ENCODE measurements at regions of chr6 and their contacts with region 1.

Region 1: DNA sequence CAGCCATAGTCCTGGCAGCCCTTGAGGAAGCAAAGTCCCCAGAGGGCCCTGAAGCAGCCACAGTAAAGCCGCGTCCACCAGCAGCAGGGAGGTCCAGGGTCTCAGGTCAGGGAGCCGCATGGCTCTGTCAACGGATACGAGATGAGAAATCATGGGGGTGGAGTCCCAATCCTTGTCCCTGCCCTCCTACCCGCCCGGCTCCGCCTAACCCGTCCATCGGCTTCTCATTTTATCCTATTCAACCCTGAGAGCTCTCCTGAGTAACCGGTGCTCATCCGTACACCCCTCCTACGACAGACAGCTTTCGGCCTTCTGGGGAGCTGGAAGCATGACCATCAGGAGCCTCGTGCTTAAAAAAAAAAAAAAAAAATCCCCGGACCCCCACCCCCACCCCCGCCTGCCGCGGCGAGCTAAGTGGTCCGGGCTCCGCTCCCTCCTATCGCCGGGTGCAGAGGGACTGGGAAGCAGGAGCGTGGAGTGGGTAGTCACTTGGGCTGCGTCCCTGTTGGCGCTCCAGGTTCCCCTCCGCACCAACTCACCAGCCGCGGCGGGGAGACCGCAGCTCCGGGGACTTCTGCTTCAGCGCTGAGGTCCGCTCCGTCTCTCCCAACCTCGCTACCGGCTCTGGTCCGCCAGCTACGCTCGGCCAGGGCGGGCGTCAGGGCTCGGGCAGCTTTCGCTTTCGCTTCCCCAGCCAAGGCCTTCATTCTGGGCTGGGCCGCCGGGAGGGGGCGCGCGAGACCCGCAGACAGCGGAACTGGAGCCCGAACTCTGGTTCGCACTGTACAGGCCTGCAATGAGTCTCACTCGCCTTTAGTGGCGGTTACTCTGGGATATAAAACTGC is at the start of gene TAP2:
- DNase-seq: peak; percentile 100
- H3K4me3 Mint-ChIP-seq: peak within 1 kb of the TSS; percentile 77
- H3K27ac Mint-ChIP-seq: peak within 1 kb of the TSS; percentile 0
- H3K4me1 Mint-ChIP-seq: peaks cover 29% of the 10 kb centered on the region
- H3K27me3 Mint-ChIP-seq: no peaks in the 10 kb centered on the region
- CTCF ChIP-seq: peak; percentile 98
- total RNA-seq, gene TAP2: 180 and 279 TPM in 2 replicates

Region 2: DNA sequence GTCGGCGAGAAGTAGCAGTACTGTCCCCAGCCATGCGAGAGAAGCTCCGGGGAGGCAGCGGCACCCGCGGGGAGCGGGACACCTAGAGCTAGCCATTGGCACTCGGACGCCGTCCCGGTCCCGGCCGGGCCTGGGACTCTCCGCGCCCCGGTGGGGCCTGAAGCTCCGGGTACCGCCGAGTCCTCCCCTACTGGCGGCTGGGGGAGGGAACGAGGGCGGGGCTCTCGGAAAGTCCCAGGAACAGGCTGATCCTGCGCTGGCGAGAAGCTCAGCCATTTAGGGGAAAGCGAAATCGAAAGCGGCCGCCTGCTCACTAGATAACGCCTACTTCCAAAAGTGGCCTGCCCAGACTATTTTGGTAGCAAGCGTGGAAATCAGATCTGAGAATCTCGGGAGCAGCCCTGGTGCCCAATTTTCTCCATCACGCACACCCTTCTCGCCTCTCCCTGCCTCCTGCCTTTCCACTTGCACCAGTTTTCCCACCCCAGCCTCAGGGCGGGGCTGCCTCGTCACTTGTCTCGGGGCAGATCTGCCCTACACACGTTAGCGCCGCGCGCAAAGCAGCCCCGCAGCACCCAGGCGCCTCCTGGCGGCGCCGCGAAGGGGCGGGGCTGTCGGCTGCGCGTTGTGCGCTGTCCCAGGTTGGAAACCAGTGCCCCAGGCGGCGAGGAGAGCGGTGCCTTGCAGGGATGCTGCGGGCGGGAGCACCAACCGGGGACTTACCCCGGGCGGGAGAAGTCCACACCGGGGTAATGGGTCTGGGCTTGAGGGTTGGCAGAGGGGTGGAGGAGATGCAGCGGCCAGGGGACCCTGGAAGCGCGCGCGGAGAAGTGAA is 15.4 kb after region 1 on chr6 and contains the starts of genes PSMB9 and TAP1:
- CTCF ChIA-PET with region 1: interaction called, 131 read pairs
- intact Hi-C with region 1: loop called (anchors 2 kb)
- DNase-seq: peak; percentile 99
- H3K4me3 Mint-ChIP-seq: peak within 1 kb of the TSS; percentile 100
- H3K27ac Mint-ChIP-seq: peak within 1 kb of the TSS; percentile 92
- H3K4me1 Mint-ChIP-seq: peaks cover 30% of the 10 kb centered on the region
- H3K27me3 Mint-ChIP-seq: no peaks in the 10 kb centered on the region
- CTCF ChIP-seq: peak; percentile 87
- total RNA-seq, gene PSMB9: 120 and 201 TPM in 2 replicates
- total RNA-seq, gene TAP1: 75.1 and 141 TPM in 2 replicates

Region 3: GRCh38 chr6:32868257-32868788 is 30.0 kb after region 1 on chr6:
- CTCF ChIA-PET with region 1: interaction called, 171 read pairs
- intact Hi-C with region 1: loop called (anchors 1 kb)
- DNase-seq: peak; percentile 88
- H3K4me3 Mint-ChIP-seq: no peak overlapping the region
- H3K27ac Mint-ChIP-seq: no peak overlapping the region
- H3K4me1 Mint-ChIP-seq: peaks cover 9% of the 10 kb centered on the region
- H3K27me3 Mint-ChIP-seq: peaks cover 26% of the 10 kb centered on the region
- CTCF ChIP-seq: peak; percentile 90

Region 4: DNA sequence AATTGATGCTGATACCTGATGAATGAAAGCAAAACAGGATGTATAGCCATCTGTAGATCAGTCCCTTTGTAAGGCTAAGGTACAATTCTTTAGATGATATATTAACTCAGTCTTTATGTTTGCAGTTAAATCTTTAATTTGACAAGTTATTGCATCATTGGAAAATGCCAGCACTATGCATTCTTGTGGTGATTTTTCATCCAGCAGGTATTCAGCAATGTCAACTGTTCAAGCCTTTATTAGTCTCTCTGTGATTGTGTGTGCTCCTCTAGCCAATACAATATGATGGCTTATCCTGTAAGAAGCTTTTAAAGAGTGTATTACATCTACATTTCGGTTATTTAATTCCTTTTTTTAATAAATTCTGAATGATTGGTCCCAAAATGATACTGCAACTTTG is 68.2 kb after region 1 on chr6:
- CTCF ChIA-PET with region 1: interaction called, 15 read pairs
- intact Hi-C with region 1: no loop called
- DNase-seq: peak; percentile 34
- H3K4me3 Mint-ChIP-seq: no peak overlapping the region
- H3K27ac Mint-ChIP-seq: peak overlapping the region; percentile 89
- H3K4me1 Mint-ChIP-seq: peaks cover 68% of the 10 kb centered on the region
- H3K27me3 Mint-ChIP-seq: no peaks in the 10 kb centered on the region
- CTCF ChIP-seq: no peak

Region 5: GRCh38 chr6:32971581-32972352 is 133.4 kb after region 1 on chr6:
- CTCF ChIA-PET with region 1: interaction called, 14 read pairs
- intact Hi-C with region 1: no loop called
- DNase-seq: peak; percentile 100
- H3K4me3 Mint-ChIP-seq: peak overlapping the region; percentile 77
- H3K27ac Mint-ChIP-seq: peak overlapping the region; percentile 85
- H3K4me1 Mint-ChIP-seq: peaks cover 33% of the 10 kb centered on the region
- H3K27me3 Mint-ChIP-seq: no peaks in the 10 kb centered on the region
- CTCF ChIP-seq: no peak

Region 6: DNA sequence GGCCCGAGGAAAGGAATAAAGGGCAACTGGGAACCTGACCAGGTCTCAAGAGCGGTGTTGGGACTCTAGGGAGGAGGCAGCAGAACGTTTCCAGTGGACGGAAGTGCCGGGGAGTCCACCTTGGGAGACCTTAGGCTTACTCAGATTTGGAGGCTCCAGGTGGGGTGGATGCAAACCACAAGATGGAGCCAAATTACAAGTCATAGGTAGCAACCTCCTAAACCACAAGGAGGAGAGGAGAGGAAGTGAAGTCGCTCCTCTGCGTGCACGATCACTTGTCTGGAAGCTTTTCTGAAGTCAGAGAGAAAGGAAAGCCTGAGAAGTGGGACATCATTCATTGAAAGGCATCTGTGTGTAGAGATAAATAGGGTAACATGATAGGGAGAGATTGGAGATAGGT is 161.7 kb after region 1 on chr6:
- CTCF ChIA-PET with region 1: no interaction called
- intact Hi-C with region 1: no loop called
- DNase-seq: peak; percentile 74
- H3K4me3 Mint-ChIP-seq: no peak overlapping the region
- H3K27ac Mint-ChIP-seq: no peak overlapping the region
- H3K4me1 Mint-ChIP-seq: peaks cover 10% of the 10 kb centered on the region
- H3K27me3 Mint-ChIP-seq: peaks cover 63% of the 10 kb centered on the region
- CTCF ChIP-seq: peak; percentile 70

Region 7: GRCh38 chr6:33276864-33277662 is 438.7 kb after region 1 on chr6 and contains the start of gene B3GALT4:
- CTCF ChIA-PET with region 1: no interaction called
- intact Hi-C with region 1: no loop called
- DNase-seq: peak; percentile 96
- H3K4me3 Mint-ChIP-seq: peak within 1 kb of the TSS; percentile 94
- H3K27ac Mint-ChIP-seq: peak within 1 kb of the TSS; percentile 100
- H3K4me1 Mint-ChIP-seq: peaks cover 60% of the 10 kb centered on the region
- H3K27me3 Mint-ChIP-seq: peaks cover 5% of the 10 kb centered on the region
- CTCF ChIP-seq: peak; percentile 74
- total RNA-seq, gene B3GALT4: 18.2 and 21.6 TPM in 2 replicates